ENCODE measurements at regions of chr17 and their contacts with region 1.

Region 1: DNA sequence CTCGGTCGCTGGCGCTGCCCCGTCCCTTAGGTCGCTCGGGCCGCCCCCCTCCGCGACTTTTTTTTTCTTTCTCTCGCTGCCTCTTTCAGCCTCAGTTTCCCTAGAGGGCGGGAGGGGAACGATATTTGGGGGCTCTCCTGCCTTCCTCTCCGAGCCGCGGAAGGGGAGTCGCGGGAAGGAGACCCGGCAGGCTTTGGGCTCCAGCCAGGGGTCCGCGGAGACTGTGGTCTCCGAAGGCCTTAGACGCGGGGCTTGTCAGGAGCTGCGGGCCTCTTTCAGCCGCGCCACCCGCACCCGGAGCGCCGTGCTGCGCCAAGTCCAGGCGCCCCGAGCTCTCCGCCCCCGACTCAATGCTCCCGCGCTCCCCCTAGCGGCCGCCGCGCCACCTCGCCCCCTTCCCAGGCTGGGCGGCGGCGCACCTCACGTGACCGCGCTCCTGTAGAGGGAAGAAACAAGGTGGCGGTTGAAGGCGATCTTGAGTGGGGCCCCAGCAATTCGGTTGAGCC is at the start of gene LRRC37B:
- DNase-seq: peak; percentile 91
- H3K4me3 Mint-ChIP-seq: peak within 1 kb of the TSS; percentile 90
- H3K27ac Mint-ChIP-seq: peak within 1 kb of the TSS; percentile 94
- H3K4me1 Mint-ChIP-seq: peaks cover 41% of the 10 kb centered on the region
- H3K27me3 Mint-ChIP-seq: peaks cover 11% of the 10 kb centered on the region

Region 2: DNA sequence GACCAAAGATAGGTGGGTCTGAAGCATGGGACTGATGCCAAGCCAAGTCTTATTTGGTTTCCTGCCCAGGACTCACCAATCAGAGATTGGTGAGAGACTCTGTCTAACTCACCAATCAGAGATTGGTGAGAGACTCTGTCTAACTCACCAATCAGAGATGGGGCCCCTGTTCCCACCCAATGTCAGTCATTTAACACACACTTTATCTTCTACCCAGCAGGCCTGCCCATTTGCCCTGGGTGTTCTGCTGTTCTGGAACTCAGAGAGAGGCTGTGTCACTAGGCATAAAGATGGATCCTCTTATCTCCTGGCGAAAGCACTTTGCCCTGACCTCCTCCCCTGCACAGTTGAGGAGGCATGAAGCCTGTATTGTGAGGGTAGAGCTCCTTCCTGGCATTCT is 129.8 kb after region 1 on chr17:
- CTCF ChIA-PET with region 1: interaction called, 44 read pairs
- DNase-seq: no peak
- H3K4me3 Mint-ChIP-seq: no peak overlapping the region
- H3K27ac Mint-ChIP-seq: no peak overlapping the region
- H3K4me1 Mint-ChIP-seq: peaks cover 27% of the 10 kb centered on the region
- H3K27me3 Mint-ChIP-seq: peaks cover 3% of the 10 kb centered on the region